Activated T-helper 2 cell treated with anti-CD3 and anti-CD28 coated beads, Interferon-gamma antibody, Interleukin-2, Interleukin-4, amounts not matched to agents 10 μg/mL and 5 μg/mL and 100 μg/mL, durations not matched to agents 14 hours and 24 hours and 36 hours (primary cell): ENCODE measurements at regions of chr9 and their contacts with region 1.

Region 1: GRCh38 chr9:88593537-88594185 is 58.7 kb downstream of the NXNL2 start:
- DNase-seq: peak; percentile 32
- H3K4me3 Mint-ChIP-seq: no peak overlapping the region
- H3K27ac Mint-ChIP-seq: no peak overlapping the region
- H3K4me1 Mint-ChIP-seq: peaks cover 7% of the 10 kb centered on the region
- H3K27me3 Mint-ChIP-seq: peaks cover 23% of the 10 kb centered on the region

Region 2: DNA sequence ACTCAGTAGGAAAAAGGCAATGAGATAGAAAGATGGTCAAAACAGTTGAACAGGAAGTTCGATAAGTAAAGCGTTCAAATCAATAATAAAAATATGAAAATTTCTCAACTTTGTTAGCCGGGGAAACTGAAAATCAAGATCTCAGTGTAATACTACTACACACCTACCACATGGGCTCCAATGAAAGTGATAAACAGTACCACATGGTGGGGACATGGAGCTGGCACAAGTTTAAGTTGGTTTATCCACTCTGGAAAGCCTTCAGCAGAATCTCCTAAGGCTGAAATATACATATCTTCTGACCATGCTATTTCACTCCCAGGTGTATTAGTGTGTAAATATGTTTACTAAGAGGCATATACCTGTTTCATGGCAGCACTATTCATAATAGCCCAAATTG is 68.1 kb after region 1 on chr9:
- intact Hi-C with region 1: no loop called
- DNase-seq: no peak
- H3K4me3 Mint-ChIP-seq: no peak overlapping the region
- H3K27ac Mint-ChIP-seq: no peak overlapping the region
- H3K4me1 Mint-ChIP-seq: no peaks in the 10 kb centered on the region
- H3K27me3 Mint-ChIP-seq: peaks cover 4% of the 10 kb centered on the region

Region 3: DNA sequence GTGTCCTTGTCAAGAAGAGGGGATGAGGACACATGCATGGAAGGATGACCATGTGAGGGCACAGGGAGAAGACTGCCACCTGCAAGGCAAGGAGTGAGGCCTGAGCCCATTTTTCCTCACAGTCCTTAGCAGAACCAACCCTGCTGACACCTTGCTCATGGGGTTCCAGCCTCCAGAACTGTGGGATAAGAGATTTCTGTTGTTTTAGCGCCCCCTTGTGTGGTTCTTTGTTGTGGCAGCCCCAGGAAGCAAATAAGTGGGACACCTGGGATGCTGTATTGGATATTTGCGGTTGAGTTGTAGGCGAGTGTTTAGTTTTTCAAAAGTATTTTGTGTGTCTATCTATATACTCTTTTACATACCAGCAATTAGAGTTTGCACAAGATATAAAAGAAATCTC is 147.7 kb after region 1 on chr9:
- intact Hi-C with region 1: loop called (anchors 2 kb)
- DNase-seq: no peak
- H3K4me3 Mint-ChIP-seq: no peak overlapping the region
- H3K27ac Mint-ChIP-seq: no peak overlapping the region
- H3K4me1 Mint-ChIP-seq: no peaks in the 10 kb centered on the region
- H3K27me3 Mint-ChIP-seq: peaks cover 19% of the 10 kb centered on the region

Region 4: GRCh38 chr9:89000973-89001916 is 407.6 kb after region 1 on chr9:
- intact Hi-C with region 1: loop called (anchors 2 kb)
- DNase-seq: peak; percentile 65
- H3K4me3 Mint-ChIP-seq: no peak overlapping the region
- H3K27ac Mint-ChIP-seq: no peak overlapping the region
- H3K4me1 Mint-ChIP-seq: peaks cover 2% of the 10 kb centered on the region
- H3K27me3 Mint-ChIP-seq: no peaks in the 10 kb centered on the region

Region 5: GRCh38 chr9:89278997-89279739 is 685.5 kb after region 1 on chr9:
- intact Hi-C with region 1: loop called (anchors 5 kb)
- DNase-seq: no peak
- H3K4me3 Mint-ChIP-seq: no peak overlapping the region
- H3K27ac Mint-ChIP-seq: no peak overlapping the region
- H3K4me1 Mint-ChIP-seq: peaks cover 23% of the 10 kb centered on the region
- H3K27me3 Mint-ChIP-seq: peaks cover 17% of the 10 kb centered on the region